ENCODE measurements at regions of chr1 and their contacts with region 1.

Region 1: GRCh38 chr1:156383023-156383422 is 14.0 kb downstream of the RHBG start:
- DNase-seq: peak; percentile 91
- H3K4me3 ChIP-seq: no peak overlapping the region
- H3K27ac ChIP-seq: no peak overlapping the region
- H3K4me1 ChIP-seq: peaks cover 5 to 6% of the 10 kb centered on the region in 2 experiments; a peak in 2 of 4 replicates
- H3K27me3 ChIP-seq: no peaks in the 10 kb centered on the region
- CTCF ChIP-seq: peak; percentile 81
- EP300 ChIP-seq: no peak
- RAD21 ChIP-seq: peak; percentile 86

Region 2: DNA sequence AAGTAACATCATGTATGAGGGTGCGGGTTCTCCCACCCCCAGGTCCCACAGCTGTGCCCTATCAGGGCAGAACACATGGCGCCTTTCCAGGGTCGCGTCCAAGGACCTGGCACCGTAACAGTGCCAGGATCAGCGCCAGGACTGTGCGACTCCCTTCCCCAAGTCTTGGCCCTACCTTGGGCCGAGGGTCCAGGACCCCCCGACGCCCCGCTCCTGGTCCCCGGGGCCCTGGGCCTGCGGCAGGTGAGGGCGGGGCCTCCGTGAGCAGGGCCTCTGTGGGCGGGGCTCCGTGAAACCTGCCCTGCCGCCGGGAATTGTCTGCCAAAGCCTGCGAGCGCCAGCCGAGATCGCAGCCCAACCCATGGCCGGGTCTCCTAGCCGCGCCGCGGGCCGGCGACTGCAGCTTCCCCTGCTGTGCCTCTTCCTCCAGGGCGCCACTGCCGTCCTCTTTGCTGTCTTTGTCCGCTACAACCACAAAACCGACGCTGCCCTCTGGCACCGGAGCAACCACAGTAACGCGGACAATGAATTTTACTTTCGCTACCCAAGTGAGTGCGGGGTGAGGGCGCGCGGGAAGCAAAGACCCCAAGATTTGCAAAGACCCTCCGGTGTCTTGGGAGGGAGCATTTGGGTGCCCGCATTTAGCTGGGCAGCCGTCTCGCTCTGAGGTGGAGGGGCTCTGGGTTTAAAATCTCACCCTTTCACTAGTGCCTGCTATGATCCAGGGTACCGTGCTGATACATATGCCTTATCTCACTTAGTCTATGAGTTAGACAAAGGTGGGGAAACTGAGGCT is 13.9 kb before region 1 on chr1 and contains the start of gene RHBG:
- CTCF ChIA-PET with region 1: interaction called, 117 read pairs
- POLR2A ChIA-PET with region 1: no interaction called
- DNase-seq: no peak
- H3K4me3 ChIP-seq: no peak within 1 kb of the TSS
- H3K27ac ChIP-seq: peak within 1 kb of the TSS in 1 of 2 experiments; percentile 64; a peak in 2 of 4 replicates
- H3K4me1 ChIP-seq: peaks cover 0 to 17% of the 10 kb centered on the region in 2 experiments; a peak in 1 of 4 replicates
- H3K27me3 ChIP-seq: no peaks in the 10 kb centered on the region
- CTCF ChIP-seq: no peak
- EP300 ChIP-seq: no peak
- RAD21 ChIP-seq: no peak
- polyA plus RNA-seq, gene RHBG: 0.18 TPM in 1 of 2 replicates, not detected in the other

Region 3: GRCh38 chr1:156421062-156421938 is 38.3 kb after region 1 on chr1:
- CTCF ChIA-PET with region 1: interaction called, 412 read pairs
- POLR2A ChIA-PET with region 1: no interaction called
- DNase-seq: peak; percentile 98
- H3K4me3 ChIP-seq: peak overlapping the region; percentile 10 to 48; a peak in 3 of 4 replicates
- H3K27ac ChIP-seq: peak overlapping the region in 1 of 2 experiments; percentile 34; a peak in 1 of 4 replicates
- H3K4me1 ChIP-seq: peaks cover 11 to 28% of the 10 kb centered on the region in 2 experiments; a peak in 3 of 4 replicates
- H3K27me3 ChIP-seq: peaks cover 53% of the 10 kb centered on the region
- CTCF ChIP-seq: no peak
- EP300 ChIP-seq: no peak
- RAD21 ChIP-seq: no peak

Region 4: GRCh38 chr1:156456622-156457465 is 73.8 kb after region 1 on chr1:
- CTCF ChIA-PET with region 1: interaction called, 31 read pairs
- POLR2A ChIA-PET with region 1: no interaction called
- DNase-seq: peak; percentile 96
- H3K4me3 ChIP-seq: peak overlapping the region; percentile 56 to 70
- H3K27ac ChIP-seq: peak overlapping the region; percentile 96 to 97
- H3K4me1 ChIP-seq: peaks cover 3 to 5% of the 10 kb centered on the region in 2 experiments; a peak in 2 of 4 replicates
- H3K27me3 ChIP-seq: no peaks in the 10 kb centered on the region
- CTCF ChIP-seq: no peak
- EP300 ChIP-seq: no peak
- RAD21 ChIP-seq: no peak

Region 5: DNA sequence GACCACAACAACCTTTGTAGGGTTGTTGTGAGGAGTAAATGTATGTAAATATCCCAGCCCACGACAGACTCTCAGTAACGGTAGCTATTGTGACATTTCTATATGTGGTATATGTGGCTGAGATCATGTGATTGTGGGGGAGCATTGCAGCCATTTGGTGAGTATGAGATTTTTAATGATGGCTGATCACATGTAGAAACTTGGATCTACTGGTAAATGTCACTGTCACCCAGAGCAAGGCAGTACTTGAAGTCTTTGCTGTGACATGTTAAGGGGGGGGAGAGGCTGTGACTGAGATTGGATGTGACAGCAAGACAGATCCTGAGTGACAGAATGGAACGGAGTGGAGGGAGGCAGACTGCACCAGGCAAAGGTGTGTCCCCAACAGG is 141.5 kb after region 1 on chr1:
- CTCF ChIA-PET with region 1: interaction called, 15 read pairs
- POLR2A ChIA-PET with region 1: no interaction called
- DNase-seq: no peak
- H3K4me3 ChIP-seq: no peak overlapping the region
- H3K27ac ChIP-seq: no peak overlapping the region
- H3K4me1 ChIP-seq: peaks cover 0 to 12% of the 10 kb centered on the region in 2 experiments; a peak in 1 of 4 replicates
- H3K27me3 ChIP-seq: no peaks in the 10 kb centered on the region
- CTCF ChIP-seq: no peak
- EP300 ChIP-seq: no peak
- RAD21 ChIP-seq: no peak

Region 6: GRCh38 chr1:156608036-156608674 is 225.1 kb after region 1 on chr1:
- CTCF ChIA-PET with region 1: interaction called, 12 read pairs
- POLR2A ChIA-PET with region 1: no interaction called
- DNase-seq: peak; percentile 65
- H3K4me3 ChIP-seq: peak overlapping the region in 1 of 2 experiments; percentile 18; a peak in 1 of 4 replicates
- H3K27ac ChIP-seq: no peak overlapping the region
- H3K4me1 ChIP-seq: peaks cover 0 to 2% of the 10 kb centered on the region in 2 experiments; a peak in 1 of 4 replicates
- H3K27me3 ChIP-seq: no peaks in the 10 kb centered on the region
- CTCF ChIP-seq: peak; percentile 81
- EP300 ChIP-seq: no peak
- RAD21 ChIP-seq: peak; percentile 81